Ovary (tissue), 10 donors: ENCODE measurements at regions of chr5 and their contacts with region 1.

Region 1: DNA sequence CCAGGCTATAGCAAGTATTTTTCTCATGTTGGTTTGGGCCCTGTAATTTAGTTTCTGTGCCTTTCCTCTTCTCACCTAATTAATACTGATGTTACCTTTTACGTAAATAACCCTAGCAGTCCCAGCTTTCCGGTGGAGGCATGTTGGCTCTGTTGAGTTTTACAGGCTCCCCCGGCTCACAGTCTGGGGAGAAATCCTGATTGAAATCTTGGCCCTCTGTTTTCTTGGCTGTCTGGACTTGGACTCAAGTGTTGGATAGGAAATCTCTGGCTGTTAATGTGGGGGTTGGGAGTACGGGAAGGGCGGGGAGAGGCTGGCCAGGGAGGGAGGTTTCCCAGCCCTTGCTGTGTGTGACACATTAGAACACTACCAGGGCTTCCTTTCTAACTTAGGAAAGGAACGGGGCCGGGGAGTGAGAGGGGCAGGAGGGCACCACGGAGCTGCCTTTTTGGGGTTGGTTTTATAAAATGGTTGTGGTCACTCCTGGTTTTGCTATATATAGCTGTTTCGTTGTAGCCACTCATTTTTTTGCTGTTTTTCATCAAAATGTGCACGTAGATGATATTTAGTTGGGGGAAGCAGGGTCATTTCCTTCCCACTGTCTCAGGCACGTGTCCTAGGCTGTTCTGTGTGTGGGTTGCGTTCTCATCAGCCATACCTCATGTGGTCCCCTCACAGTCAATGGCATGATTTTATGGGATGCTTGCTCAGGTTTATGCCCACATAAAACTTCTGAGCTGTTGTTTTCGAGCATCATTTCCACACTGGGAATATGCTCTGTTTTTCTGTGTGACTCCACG is 11.0 kb downstream of the TRIO start:
- DNase-seq: peak in 2 of 5 donors; percentile 49 to 61
- H3K4me3 ChIP-seq: no peak overlapping the region
- H3K27ac ChIP-seq: no peak overlapping the region
- H3K4me1 ChIP-seq: peaks cover 21% of the 10 kb centered on the region
- H3K27me3 ChIP-seq: no peaks in the 10 kb centered on the region
- CTCF ChIP-seq: no peak
- EP300 ChIP-seq: no peak
- POLR2A ChIP-seq: no peak

Region 2: DNA sequence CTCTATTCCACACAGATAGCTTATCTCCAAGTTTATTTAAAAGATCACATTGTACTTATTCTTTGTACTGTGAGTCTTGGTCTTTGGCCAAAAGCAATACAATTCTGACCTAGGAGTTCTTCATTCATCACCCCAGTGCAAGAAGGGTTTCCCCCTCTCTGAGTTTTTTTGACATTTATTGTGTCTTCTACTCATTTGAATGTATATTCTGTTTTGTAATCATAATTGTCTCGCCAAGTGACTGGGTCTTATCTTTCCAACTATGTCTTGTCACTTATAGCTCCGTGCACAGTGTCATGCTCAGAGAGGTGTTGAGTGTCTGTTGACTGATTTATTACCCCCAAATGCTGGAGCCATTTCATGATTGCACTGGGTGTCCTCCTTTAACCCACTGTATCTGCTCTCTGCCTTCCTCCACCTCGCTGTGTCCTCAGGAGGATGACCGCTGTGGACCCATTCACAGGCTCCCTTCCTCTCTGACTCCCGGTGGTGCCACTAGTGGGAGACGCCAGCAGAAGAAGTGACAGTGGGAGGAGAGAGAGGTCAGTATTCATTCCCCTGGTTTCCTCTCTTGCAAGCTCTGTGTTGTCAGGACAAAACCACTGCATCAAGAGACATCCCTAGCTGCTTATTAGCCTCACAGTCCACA is 22.2 kb before region 1 on chr5:
- intact Hi-C with region 1: no loop called
- DNase-seq: no peak
- H3K4me3 ChIP-seq: no peak overlapping the region
- H3K27ac ChIP-seq: no peak overlapping the region
- H3K4me1 ChIP-seq: no peaks in the 10 kb centered on the region
- H3K27me3 ChIP-seq: no peaks in the 10 kb centered on the region
- CTCF ChIP-seq: no peak
- EP300 ChIP-seq: no peak
- POLR2A ChIP-seq: no peak

Region 3: GRCh38 chr5:14234219-14234618 is 80.1 kb after region 1 on chr5:
- intact Hi-C with region 1: no loop called
- DNase-seq: no peak
- H3K4me3 ChIP-seq: no peak overlapping the region
- H3K27ac ChIP-seq: no peak overlapping the region
- H3K4me1 ChIP-seq: peaks cover 8% of the 10 kb centered on the region
- H3K27me3 ChIP-seq: no peaks in the 10 kb centered on the region
- CTCF ChIP-seq: no peak
- EP300 ChIP-seq: no peak
- POLR2A ChIP-seq: no peak

Region 4: GRCh38 chr5:14250084-14250695 is 96.1 kb after region 1 on chr5:
- intact Hi-C with region 1: loop called in 1 of 4 experiments (anchors 5 kb)
- DNase-seq: peak; percentile 80 to 89 (median 84)
- H3K4me3 ChIP-seq: peak overlapping the region; percentile 25
- H3K27ac ChIP-seq: peak overlapping the region; percentile 40 to 65
- H3K4me1 ChIP-seq: peaks cover 5% of the 10 kb centered on the region
- H3K27me3 ChIP-seq: no peaks in the 10 kb centered on the region
- CTCF ChIP-seq: no peak
- EP300 ChIP-seq: no peak
- POLR2A ChIP-seq: no peak

Region 5: GRCh38 chr5:14316471-14316870 is 162.3 kb after region 1 on chr5:
- intact Hi-C with region 1: no loop called
- DNase-seq: peak; percentile 27 to 79 (median 69)
- H3K4me3 ChIP-seq: no peak overlapping the region
- H3K27ac ChIP-seq: no peak overlapping the region
- H3K4me1 ChIP-seq: peaks cover 8% of the 10 kb centered on the region
- H3K27me3 ChIP-seq: no peaks in the 10 kb centered on the region
- CTCF ChIP-seq: no peak
- EP300 ChIP-seq: no peak
- POLR2A ChIP-seq: no peak

Region 6: GRCh38 chr5:14417276-14417730 is 263.2 kb after region 1 on chr5:
- intact Hi-C with region 1: no loop called
- DNase-seq: peak in 2 of 5 donors; percentile 38 to 40
- H3K4me3 ChIP-seq: no peak overlapping the region
- H3K27ac ChIP-seq: peak overlapping the region in 1 of 2 donors; percentile 52
- H3K4me1 ChIP-seq: peaks cover 15% of the 10 kb centered on the region
- H3K27me3 ChIP-seq: no peaks in the 10 kb centered on the region
- CTCF ChIP-seq: no peak
- EP300 ChIP-seq: no peak
- POLR2A ChIP-seq: no peak